Vagina (tissue), 2 donors: ENCODE measurements at regions of chr5 and their contacts with region 1.

Region 1: DNA sequence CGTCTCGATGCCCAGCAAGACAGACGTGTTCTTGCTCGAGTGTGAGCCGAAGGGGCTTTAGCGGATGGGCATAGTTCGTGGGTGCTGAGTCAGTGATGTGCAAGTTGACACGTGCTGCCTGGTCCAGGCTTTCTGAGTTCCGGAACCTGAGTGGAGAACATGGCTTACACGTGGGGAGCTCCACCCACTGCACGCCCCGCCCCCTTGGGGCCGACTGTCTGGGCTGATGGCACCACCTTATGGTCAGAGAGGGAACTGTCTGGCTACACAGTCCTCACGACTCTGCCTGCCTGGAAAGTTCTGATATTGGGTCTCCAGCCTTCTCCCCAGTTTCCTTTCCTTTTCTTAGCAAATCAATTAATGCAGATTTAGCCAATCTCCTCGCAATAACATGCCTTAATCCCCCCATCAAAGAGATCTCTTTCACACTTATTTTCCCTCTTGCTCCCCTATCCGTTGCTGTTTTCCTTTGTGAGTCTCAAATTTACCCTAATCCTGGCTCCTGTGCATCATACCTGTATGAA is 3.8 kb upstream of the STC2 start:
- DNase-seq: no peak
- H3K4me3 ChIP-seq: no peak overlapping the region
- H3K27ac ChIP-seq: no peak overlapping the region
- H3K4me1 ChIP-seq: peaks cover 30% of the 10 kb centered on the region
- H3K27me3 ChIP-seq: peaks cover 5% of the 10 kb centered on the region
- CTCF ChIP-seq: peak; percentile 88 to 94 (median 90)
- POLR2A ChIP-seq: no peak

Region 2: DNA sequence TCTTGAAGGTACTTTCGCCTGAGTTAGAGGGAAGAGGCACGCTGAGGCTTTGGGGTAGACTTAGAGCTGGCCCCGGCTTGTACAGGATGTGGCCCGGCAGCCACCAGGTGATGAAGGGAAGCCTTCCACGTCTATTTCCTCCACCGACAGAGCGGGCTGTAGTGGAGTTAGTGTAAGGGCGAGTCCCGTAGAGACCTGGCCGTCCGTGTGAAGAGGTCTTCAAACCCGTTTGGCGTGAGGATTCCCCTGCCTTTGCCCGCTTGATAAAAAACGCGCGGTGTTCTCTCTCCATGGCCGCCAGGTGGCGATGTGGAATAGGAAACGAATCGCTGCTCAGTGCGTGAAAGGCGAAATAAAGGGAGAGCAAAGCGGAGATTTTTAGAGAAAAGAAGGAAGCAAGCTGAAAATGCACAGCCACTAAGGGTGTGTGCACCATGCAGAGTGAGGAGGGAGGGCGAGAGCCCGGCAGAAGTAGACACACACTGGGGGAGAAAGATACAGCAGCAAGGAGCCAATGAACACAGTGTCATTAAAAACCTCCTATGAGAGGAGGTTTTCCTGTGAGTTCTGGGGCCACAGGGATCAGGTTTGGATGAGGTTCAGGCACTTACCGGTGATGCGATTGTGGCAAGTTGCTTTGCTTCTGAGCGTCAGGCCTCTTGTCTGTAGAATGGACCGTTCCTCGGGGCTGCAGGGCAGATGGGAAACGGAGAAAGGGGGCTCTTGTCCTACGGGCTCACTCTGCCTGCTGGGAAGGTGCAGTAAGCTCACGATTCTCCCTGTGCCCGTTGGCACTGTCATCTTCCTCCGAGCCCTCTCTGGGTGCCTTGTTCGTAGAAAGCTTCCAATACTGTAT is 38.0 kb before region 1 on chr5:
- intact Hi-C with region 1: loop called (anchors 2 kb)
- DNase-seq: no peak
- H3K4me3 ChIP-seq: peak overlapping the region in 1 of 2 donors; percentile 21
- H3K27ac ChIP-seq: no peak overlapping the region
- H3K4me1 ChIP-seq: peaks cover 15% of the 10 kb centered on the region
- H3K27me3 ChIP-seq: no peaks in the 10 kb centered on the region
- CTCF ChIP-seq: peak; percentile 92 to 96 (median 93)
- POLR2A ChIP-seq: no peak